CD14-positive monocyte (primary cell): ENCODE measurements at regions of chr17 and their contacts with region 1.

Region 1: GRCh38 chr17:6473128-6473767 is 29.0 kb downstream of the PIMREG start:
- DNase-seq: peak; percentile 43 to 62 (median 58)
- H3K4me3 ChIP-seq: no peak overlapping the region
- H3K4me3 Mint-ChIP-seq: no peak overlapping the region
- H3K27ac ChIP-seq: no peak overlapping the region
- H3K27ac Mint-ChIP-seq: no peak overlapping the region
- H3K4me1 ChIP-seq: no peaks in the 10 kb centered on the region
- H3K4me1 Mint-ChIP-seq: no peaks in the 10 kb centered on the region
- H3K27me3 ChIP-seq: no peaks in the 10 kb centered on the region
- H3K27me3 Mint-ChIP-seq: peaks cover 8 to 10% (median 8%) of the 10 kb centered on the region in 3 donors
- CTCF ChIP-seq: peak; percentile 93

Region 2: GRCh38 chr17:6443692-6444569 is 29.3 kb before region 1 on chr17 and contains the start of gene PIMREG:
- intact Hi-C with region 1: no loop called
- DNase-seq: peak; percentile 84 to 86 (median 86)
- H3K4me3 ChIP-seq: peak within 1 kb of the TSS; percentile 54 to 91 (median 75)
- H3K4me3 Mint-ChIP-seq: peak within 1 kb of the TSS; percentile 97 to 99
- H3K27ac ChIP-seq: peak within 1 kb of the TSS; percentile 64 to 77
- H3K27ac Mint-ChIP-seq: peak within 1 kb of the TSS; percentile 92 to 97 (median 95)
- H3K4me1 ChIP-seq: peaks cover 20 to 25% of the 10 kb centered on the region in 2 donors
- H3K4me1 Mint-ChIP-seq: peaks cover 24% of the 10 kb centered on the region
- H3K27me3 ChIP-seq: no peaks in the 10 kb centered on the region
- H3K27me3 Mint-ChIP-seq: peaks cover 6 to 13% (median 11%) of the 10 kb centered on the region in 3 donors
- CTCF ChIP-seq: no peak
- polyA plus RNA-seq, gene PIMREG: not detected

Region 3: GRCh38 chr17:6591599-6592158 is 118.4 kb after region 1 on chr17:
- intact Hi-C with region 1: no loop called
- DNase-seq: no peak
- H3K4me3 ChIP-seq: no peak overlapping the region
- H3K4me3 Mint-ChIP-seq: no peak overlapping the region
- H3K27ac ChIP-seq: peak overlapping the region in 1 of 2 donors; percentile 10
- H3K27ac Mint-ChIP-seq: no peak overlapping the region
- H3K4me1 ChIP-seq: no peaks in the 10 kb centered on the region
- H3K4me1 Mint-ChIP-seq: peaks cover 10% of the 10 kb centered on the region
- H3K27me3 ChIP-seq: no peaks in the 10 kb centered on the region
- H3K27me3 Mint-ChIP-seq: peaks cover 0 to 1% (median 0%) of the 10 kb centered on the region in 3 donors
- CTCF ChIP-seq: no peak

Region 4: DNA sequence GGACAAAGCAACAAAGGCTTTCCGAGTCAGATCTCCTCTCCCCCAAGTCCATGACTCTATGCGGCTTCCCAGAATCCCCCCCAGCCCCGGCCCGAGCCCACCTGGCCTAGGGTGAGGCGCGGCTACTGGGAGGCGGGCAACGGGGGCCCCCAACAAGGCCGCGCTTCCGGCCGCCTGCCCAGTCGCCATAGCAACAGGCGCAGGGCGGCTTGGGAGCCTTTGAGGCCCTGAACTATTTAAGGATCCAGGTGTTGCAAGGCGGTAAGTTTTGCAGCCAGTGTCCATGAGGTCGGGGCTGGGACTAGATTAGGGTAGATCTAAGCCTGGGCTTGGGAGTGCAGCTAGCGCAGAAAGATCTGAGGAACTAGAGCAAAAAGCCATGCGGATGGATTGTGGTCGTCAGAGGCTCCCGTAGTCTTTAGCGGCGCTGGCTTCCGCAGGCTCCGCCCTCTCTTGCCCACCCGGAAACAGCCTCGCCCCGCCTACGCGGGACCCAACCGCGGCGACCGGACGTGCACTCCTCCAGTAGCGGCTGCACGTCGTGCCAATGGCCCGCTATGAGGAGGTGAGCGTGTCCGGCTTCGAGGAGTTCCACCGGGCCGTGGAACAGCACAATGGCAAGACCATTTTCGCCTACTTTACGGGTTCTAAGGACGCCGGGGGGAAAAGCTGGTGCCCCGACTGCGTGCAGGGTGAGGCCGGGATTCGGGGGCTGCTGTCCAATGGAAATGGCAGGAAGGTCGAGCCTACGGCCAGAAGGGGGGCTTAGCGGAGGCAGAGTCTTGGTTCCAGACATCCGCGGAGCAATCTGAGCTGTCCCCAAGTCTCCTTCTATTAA is 167.5 kb after region 1 on chr17 and contains the starts of genes KIAA0753 and TXNDC17:
- intact Hi-C with region 1: loop called in 1 of 2 experiments (anchors 10 kb)
- DNase-seq: peak; percentile 77 to 79 (median 79)
- H3K4me3 ChIP-seq: peak within 1 kb of the TSS; percentile 86 to 95 (median 94)
- H3K4me3 Mint-ChIP-seq: peak within 1 kb of the TSS; percentile 97 to 99
- H3K27ac ChIP-seq: peak within 1 kb of the TSS; percentile 61 to 88
- H3K27ac Mint-ChIP-seq: peak within 1 kb of the TSS; percentile 89 to 98 (median 94)
- H3K4me1 ChIP-seq: peaks cover 21 to 33% of the 10 kb centered on the region in 2 donors
- H3K4me1 Mint-ChIP-seq: peaks cover 35% of the 10 kb centered on the region
- H3K27me3 ChIP-seq: no peaks in the 10 kb centered on the region
- H3K27me3 Mint-ChIP-seq: peaks cover 0 to 11% (median 3%) of the 10 kb centered on the region in 3 donors
- CTCF ChIP-seq: no peak
- polyA plus RNA-seq, gene KIAA0753: 1.7 to 6.6 (median 3.5) TPM
- polyA plus RNA-seq, gene TXNDC17: 88.8 to 357 (median 319) TPM

Region 5: DNA sequence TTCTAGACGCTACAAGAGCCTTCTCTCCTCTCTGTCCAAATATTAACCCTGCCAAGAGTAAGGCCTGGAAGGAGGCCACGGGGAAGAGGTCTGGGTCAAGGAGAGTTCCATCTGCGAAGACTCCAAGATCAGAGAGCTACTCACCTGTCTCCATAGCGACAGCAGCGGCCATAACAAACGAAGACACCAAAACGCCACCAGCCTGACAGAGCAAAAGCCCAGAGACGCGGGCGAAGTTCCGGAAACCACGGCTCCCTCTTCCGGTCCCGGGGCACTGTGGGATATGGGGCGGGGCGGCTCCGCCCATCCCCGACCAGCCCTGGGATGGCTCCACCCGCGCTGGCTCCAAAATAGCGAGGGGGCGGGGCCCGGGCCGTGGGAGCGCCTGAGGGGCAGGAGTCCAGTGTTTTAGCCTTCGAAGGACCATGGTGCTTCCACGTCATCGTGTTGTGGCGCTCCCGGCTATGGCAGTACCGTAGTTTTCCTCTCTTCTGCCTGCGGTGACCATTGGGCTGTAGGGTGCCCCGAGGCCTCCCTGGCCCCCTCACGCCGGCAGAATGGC is 178.2 kb after region 1 on chr17 and contains the starts of genes C17orf100 and MED31:
- intact Hi-C with region 1: loop called (anchors 1 to 10 kb)
- DNase-seq: peak; percentile 96 to 97 (median 96)
- H3K4me3 ChIP-seq: peak within 1 kb of the TSS; percentile 75 to 96 (median 95)
- H3K4me3 Mint-ChIP-seq: peak within 1 kb of the TSS; percentile 96 to 99
- H3K27ac ChIP-seq: peak within 1 kb of the TSS; percentile 91 to 99
- H3K27ac Mint-ChIP-seq: peak within 1 kb of the TSS; percentile 98 to 100 (median 99)
- H3K4me1 ChIP-seq: peaks cover 29 to 41% of the 10 kb centered on the region in 2 donors
- H3K4me1 Mint-ChIP-seq: peaks cover 52% of the 10 kb centered on the region
- H3K27me3 ChIP-seq: peaks cover 36 to 42% of the 10 kb centered on the region in 2 donors
- H3K27me3 Mint-ChIP-seq: peaks cover 41 to 44% (median 42%) of the 10 kb centered on the region in 3 donors
- CTCF ChIP-seq: no peak
- polyA plus RNA-seq, gene C17orf100: 0.51 to 1.8 (median 1.2) TPM
- polyA plus RNA-seq, gene MED31: 6.8 to 38.2 (median 33.6) TPM

Region 6: DNA sequence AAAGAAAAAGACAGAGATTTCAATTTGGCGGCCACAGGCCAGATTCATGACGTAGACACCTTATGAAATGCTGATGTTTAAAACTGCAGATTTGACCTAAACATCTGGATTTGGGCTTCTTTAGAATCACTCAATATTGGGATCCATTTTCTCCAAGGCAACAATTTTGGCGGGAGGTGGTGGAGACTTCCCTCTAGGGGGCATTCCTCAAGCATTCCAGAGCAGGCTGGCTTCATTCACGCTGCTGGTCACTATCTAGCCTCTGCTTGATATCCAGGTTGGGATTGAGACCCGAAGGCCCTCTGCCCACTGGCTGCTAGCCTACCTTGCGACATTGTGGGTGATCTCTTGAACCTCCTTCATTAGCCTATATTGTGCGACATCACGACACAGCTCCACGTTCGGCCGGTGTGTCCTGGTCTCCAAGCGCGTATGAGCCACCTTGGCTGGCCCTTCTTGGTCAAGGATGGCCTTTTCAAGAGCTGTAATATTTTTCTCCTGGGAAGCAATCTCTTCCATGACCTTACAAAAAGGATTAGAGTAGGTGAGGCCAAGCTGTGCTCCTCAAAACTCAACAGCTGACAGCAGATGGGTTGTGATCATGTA is 327.3 kb after region 1 on chr17:
- intact Hi-C with region 1: loop called in 1 of 2 experiments (anchors 5 kb)
- DNase-seq: no peak
- H3K4me3 ChIP-seq: no peak overlapping the region
- H3K4me3 Mint-ChIP-seq: no peak overlapping the region
- H3K27ac ChIP-seq: no peak overlapping the region
- H3K27ac Mint-ChIP-seq: no peak overlapping the region
- H3K4me1 ChIP-seq: no peaks in the 10 kb centered on the region
- H3K4me1 Mint-ChIP-seq: peaks cover 3% of the 10 kb centered on the region
- H3K27me3 ChIP-seq: no peaks in the 10 kb centered on the region
- H3K27me3 Mint-ChIP-seq: peaks cover 8 to 20% (median 12%) of the 10 kb centered on the region in 3 donors
- CTCF ChIP-seq: peak; percentile 50